Endothelial cell of umbilical vein (primary cell): ENCODE measurements at regions of chr5 and their contacts with region 1.

Region 1: DNA sequence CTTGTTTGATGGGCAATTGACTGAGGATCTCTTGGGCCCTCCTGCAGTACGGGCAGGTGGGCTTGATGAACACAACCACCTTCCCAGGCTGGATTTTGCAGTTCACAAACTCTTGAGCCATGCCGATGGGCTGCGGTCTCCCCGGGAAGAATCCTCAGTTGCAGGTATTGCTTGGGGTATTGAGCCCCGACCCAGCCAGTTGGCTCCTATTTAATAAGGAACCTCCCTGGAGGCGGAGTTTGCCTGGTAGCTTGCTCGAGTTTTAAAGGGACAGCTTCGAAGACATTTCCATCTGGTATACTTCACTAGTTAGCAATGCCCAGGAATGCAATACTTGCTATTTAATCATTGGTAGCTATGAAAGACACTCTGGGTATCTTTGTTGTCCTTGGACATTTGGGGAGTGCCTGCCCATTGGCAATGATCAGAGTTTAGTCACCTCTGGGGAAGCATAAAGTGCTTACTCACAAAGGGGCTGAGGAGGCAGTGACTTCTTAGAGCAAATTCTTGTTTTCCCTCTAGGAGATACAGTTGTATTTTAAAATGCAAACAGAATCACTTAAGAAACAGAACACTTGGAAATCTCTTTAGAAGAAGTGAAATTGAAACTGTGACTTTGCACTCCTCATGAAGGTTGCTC is at the start of gene GLRX:
- DNase-seq: peak; percentile 82
- H3K4me3 ChIP-seq: peak within 1 kb of the TSS; percentile 63 to 80 (median 69)
- H3K27ac ChIP-seq: peak within 1 kb of the TSS; percentile 54
- H3K4me1 ChIP-seq: peaks cover 26% of the 10 kb centered on the region
- H3K27me3 ChIP-seq: no peaks in the 10 kb centered on the region
- CTCF ChIP-seq: no peak
- POLR2A ChIP-seq: peak; percentile 42
- total RNA-seq, gene GLRX: 13.3 and 14.2 TPM in 2 replicates

Region 2: DNA sequence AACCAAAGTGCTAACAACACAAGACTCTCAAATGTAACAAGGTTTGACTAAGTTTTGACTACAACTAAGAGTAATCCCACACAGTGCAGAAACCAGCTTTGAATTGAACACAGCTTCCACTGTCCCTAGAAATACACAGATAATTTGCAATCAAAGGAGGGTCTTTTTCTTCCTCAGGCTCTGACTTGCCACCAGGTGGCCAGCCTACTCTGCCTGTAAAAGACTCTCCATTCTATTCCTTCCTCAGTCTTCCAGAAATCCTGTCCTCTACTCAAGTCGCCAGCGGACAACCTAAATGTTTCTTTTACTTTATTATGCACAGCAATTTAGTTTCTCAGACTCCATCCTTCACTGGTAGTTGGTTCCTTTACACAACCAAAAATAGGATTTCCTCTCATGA is 505.6 kb before region 1 on chr5:
- CTCF ChIA-PET with region 1: no interaction called
- POLR2A ChIA-PET with region 1: no interaction called
- dilution Hi-C with region 1: no loop called
- intact Hi-C with region 1: no loop called
- DNase-seq: no peak
- H3K4me3 ChIP-seq: no peak overlapping the region
- H3K27ac ChIP-seq: no peak overlapping the region
- H3K4me1 ChIP-seq: no peaks in the 10 kb centered on the region
- H3K27me3 ChIP-seq: peaks cover 4 to 17% of the 10 kb centered on the region in 2 experiments
- CTCF ChIP-seq: no peak
- POLR2A ChIP-seq: no peak

Region 3: GRCh38 chr5:95835682-95836385 is 13.2 kb after region 1 on chr5:
- CTCF ChIA-PET with region 1: interaction called, 19 read pairs
- POLR2A ChIA-PET with region 1: interaction called, 6 read pairs
- dilution Hi-C with region 1: no loop called
- intact Hi-C with region 1: loop called (anchors 1 kb)
- DNase-seq: peak; percentile 22
- H3K4me3 ChIP-seq: peak overlapping the region in 1 of 3 experiments; percentile 7
- H3K27ac ChIP-seq: no peak overlapping the region
- H3K4me1 ChIP-seq: peaks cover 21% of the 10 kb centered on the region
- H3K27me3 ChIP-seq: no peaks in the 10 kb centered on the region
- CTCF ChIP-seq: no peak
- POLR2A ChIP-seq: no peak